Activated CD4-positive, alpha-beta T cell treated with anti-CD3 and anti-CD28 coated beads, Interleukin-2, amount 10 ng/mL, durations not matched to agents 24 days and 14 days (primary cell): ENCODE measurements at regions of chr17 and their contacts with region 1.

Region 1: DNA sequence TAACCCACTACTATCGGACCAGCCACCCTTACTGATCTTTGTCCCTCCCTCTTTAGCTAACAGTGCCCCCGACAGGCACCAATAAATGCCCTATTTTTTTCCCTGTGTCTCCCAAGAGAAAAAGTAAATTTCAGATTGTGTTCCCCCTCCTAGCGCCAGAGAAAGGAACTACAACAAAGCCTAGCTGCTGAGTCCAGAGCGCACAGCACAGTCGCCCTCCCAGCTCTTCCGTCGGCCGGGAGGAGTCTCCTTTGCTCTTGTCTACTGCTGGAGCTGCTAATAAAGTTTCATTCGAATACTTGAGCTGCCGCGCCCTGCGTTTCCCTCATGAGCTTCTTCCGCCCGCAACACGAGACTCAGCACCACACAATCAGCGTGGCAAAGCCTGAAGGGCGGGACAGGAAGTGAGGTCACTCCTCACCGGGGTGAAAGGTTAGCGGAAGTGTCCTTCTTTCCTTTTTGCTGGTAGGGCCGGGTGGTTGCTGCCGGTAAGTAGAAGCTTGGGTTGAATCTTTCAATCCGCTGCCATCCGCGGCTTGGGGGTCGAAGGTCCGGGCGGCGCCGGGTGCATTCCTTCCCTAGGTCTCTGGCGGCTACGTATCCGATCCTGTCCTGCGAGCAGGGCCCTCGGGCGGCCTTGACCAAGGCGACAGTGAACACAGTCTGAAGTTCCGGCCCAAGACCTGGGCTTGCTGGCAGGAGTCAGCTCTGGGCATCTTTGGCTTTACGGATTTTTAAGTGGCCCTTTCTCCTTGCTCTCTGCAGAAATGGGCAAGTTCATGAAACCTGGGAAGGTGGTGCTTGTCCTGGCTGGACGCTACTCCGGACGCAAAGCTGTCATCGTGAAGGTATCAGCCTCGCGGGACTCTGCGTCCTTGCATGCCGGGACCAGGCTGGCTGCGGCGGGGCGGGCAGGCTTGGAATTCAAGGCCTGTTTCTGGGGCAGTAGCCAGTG is at the start of gene RPL27:
- DNase-seq: peak; percentile 99
- H3K4me3 Mint-ChIP-seq: peak within 1 kb of the TSS; percentile 99
- H3K27ac Mint-ChIP-seq: peak within 1 kb of the TSS; percentile 99
- H3K4me1 Mint-ChIP-seq: peaks cover 22% of the 10 kb centered on the region
- H3K27me3 Mint-ChIP-seq: no peaks in the 10 kb centered on the region
- total RNA-seq, gene RPL27: 1,178 and 1,206 TPM in 2 replicates

Region 2: GRCh38 chr17:42832974-42833766 is 165.1 kb before region 1 on chr17 and contains the start of gene PSME3:
- intact Hi-C with region 1: loop called (anchors 5 kb)
- DNase-seq: peak; percentile 98
- H3K4me3 Mint-ChIP-seq: peak within 1 kb of the TSS; percentile 98
- H3K27ac Mint-ChIP-seq: peak within 1 kb of the TSS; percentile 99
- H3K4me1 Mint-ChIP-seq: peaks cover 18% of the 10 kb centered on the region
- H3K27me3 Mint-ChIP-seq: peaks cover 8% of the 10 kb centered on the region
- total RNA-seq, gene PSME3: 232 and 250 TPM in 2 replicates

Region 3: GRCh38 chr17:42964161-42964932 is 33.9 kb before region 1 on chr17 and contains the start of gene AARSD1:
- intact Hi-C with region 1: loop called (anchors 2 kb)
- DNase-seq: peak; percentile 97
- H3K4me3 Mint-ChIP-seq: peak within 1 kb of the TSS; percentile 90
- H3K27ac Mint-ChIP-seq: peak within 1 kb of the TSS; percentile 95
- H3K4me1 Mint-ChIP-seq: peaks cover 13% of the 10 kb centered on the region
- H3K27me3 Mint-ChIP-seq: no peaks in the 10 kb centered on the region
- total RNA-seq, gene AARSD1: 78.2 and 78.4 TPM in 2 replicates

Region 4: GRCh38 chr17:42980398-42981397 is 17.6 kb before region 1 on chr17 and contains the start of gene RUNDC1:
- intact Hi-C with region 1: loop called (anchors 1 kb)
- DNase-seq: peak; percentile 98
- H3K4me3 Mint-ChIP-seq: peak within 1 kb of the TSS; percentile 96
- H3K27ac Mint-ChIP-seq: peak within 1 kb of the TSS; percentile 98
- H3K4me1 Mint-ChIP-seq: peaks cover 29% of the 10 kb centered on the region
- H3K27me3 Mint-ChIP-seq: no peaks in the 10 kb centered on the region
- total RNA-seq, gene RUNDC1: 20.2 and 20.5 TPM in 2 replicates